Right cardiac atrium (tissue), 5 donors: ENCODE measurements at regions of chr2 and their contacts with region 1.

Region 1: GRCh38 chr2:137947728-137948336 is 16.4 kb upstream of the HNMT start:
- DNase-seq: peak; percentile 80 to 93 (median 82)
- ATAC-seq: peak; percentile 70 to 74
- H3K4me3 ChIP-seq: no peak overlapping the region
- H3K27ac ChIP-seq: no peak overlapping the region
- H3K4me1 ChIP-seq: no peaks in the 10 kb centered on the region
- H3K27me3 ChIP-seq: no peaks in the 10 kb centered on the region

Region 2: GRCh38 chr2:138090330-138090729 is 142.5 kb after region 1 on chr2:
- intact Hi-C with region 1: loop called in 3 of 4 experiments (anchors 10 kb)
- DNase-seq: no peak
- ATAC-seq: peak; percentile 51 to 60
- H3K4me3 ChIP-seq: no peak overlapping the region
- H3K27ac ChIP-seq: no peak overlapping the region
- H3K4me1 ChIP-seq: no peaks in the 10 kb centered on the region
- H3K27me3 ChIP-seq: no peaks in the 10 kb centered on the region

Region 3: GRCh38 chr2:138364554-138365162 is 416.8 kb after region 1 on chr2:
- intact Hi-C with region 1: loop called in 1 of 4 experiments (anchors 10 kb)
- DNase-seq: no peak
- ATAC-seq: peak; percentile 71 to 76
- H3K4me3 ChIP-seq: no peak overlapping the region
- H3K27ac ChIP-seq: no peak overlapping the region
- H3K4me1 ChIP-seq: peaks cover 2% of the 10 kb centered on the region
- H3K27me3 ChIP-seq: no peaks in the 10 kb centered on the region

Region 4: GRCh38 chr2:138373993-138374408 is 426.2 kb after region 1 on chr2:
- intact Hi-C with region 1: loop called in 3 of 4 experiments (anchors 5 to 10 kb)
- DNase-seq: no peak
- ATAC-seq: no peak
- H3K4me3 ChIP-seq: no peak overlapping the region
- H3K27ac ChIP-seq: no peak overlapping the region
- H3K4me1 ChIP-seq: no peaks in the 10 kb centered on the region
- H3K27me3 ChIP-seq: no peaks in the 10 kb centered on the region

Region 5: GRCh38 chr2:138787053-138787666 is 839.3 kb after region 1 on chr2:
- intact Hi-C with region 1: no loop called
- DNase-seq: no peak
- ATAC-seq: no peak
- H3K4me3 ChIP-seq: no peak overlapping the region
- H3K27ac ChIP-seq: no peak overlapping the region
- H3K4me1 ChIP-seq: no peaks in the 10 kb centered on the region
- H3K27me3 ChIP-seq: no peaks in the 10 kb centered on the region